ENCODE measurements at regions of chr12 and their contacts with region 1.

Region 1: GRCh38 chr12:32659908-32660440 is 19.1 kb upstream of the DNM1L start:
- DNase-seq: no peak
- ATAC-seq: no peak; the same call in 1 of the 2 replicates
- H3K4me3 ChIP-seq: no peak overlapping the region
- H3K27ac ChIP-seq: no peak overlapping the region
- H3K4me1 ChIP-seq: no peaks in the 10 kb centered on the region
- H3K27me3 ChIP-seq: no peaks in the 10 kb centered on the region
- CTCF ChIP-seq: no peak

Region 2: DNA sequence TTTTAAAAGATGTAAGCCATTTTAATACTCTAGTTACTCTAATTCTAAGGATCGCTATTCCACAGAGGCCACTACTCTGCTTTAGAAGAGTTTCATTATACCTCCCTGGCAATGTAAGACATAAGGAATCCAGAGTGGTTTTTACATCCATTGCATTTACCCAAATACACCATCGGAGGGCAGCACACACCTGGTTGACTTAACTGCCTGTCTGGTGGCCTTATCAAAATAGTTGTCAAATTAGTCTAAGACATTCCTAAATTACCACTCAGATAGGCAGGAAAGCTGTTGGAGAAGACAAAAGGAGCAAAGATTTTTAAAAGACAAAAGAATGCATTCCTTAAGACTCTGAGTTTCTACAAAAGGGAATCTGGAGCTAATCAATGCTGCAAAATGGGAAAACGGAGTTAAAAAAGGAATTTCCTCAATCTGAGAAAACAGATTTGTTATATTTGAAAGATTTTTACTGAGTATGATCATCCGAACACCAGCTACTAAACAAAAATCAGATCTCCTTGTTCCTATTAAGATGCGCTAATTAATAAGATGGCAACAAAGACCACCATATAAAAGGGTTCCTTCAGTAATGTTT is 294.4 kb before region 1 on chr12:
- CTCF ChIA-PET with region 1: no interaction called
- POLR2A ChIA-PET with region 1: no interaction called
- intact Hi-C with region 1: loop called (anchors 5 kb)
- DNase-seq: peak; percentile 72
- ATAC-seq: peak; percentile 55
- H3K4me3 ChIP-seq: no peak overlapping the region
- H3K27ac ChIP-seq: no peak overlapping the region
- H3K4me1 ChIP-seq: peaks cover 4% of the 10 kb centered on the region; the same call in 1 of the 2 replicates
- H3K27me3 ChIP-seq: no peaks in the 10 kb centered on the region
- CTCF ChIP-seq: peak; percentile 85

Region 3: DNA sequence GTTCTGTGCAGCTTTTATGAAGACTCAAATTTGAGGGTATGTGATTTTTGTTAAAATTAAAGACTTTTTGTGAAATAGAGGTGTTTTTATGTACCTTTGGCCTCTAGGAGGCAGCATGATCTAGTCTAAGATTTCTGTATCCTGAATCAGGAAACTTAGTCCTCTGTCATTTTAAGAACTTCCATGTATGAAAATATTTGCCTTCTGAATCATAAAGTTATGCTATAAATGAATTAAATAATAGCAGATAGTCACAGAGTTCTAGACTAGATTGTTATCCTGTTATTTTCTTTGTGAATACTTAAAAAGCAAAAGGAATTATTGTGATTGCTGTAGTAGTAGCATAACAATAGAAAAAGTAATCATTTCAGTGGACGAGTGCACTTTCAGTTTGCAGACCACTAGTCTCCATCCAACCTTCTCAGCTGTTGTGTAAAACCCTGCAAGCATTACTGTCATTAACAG is 204.3 kb before region 1 on chr12:
- CTCF ChIA-PET with region 1: no interaction called
- POLR2A ChIA-PET with region 1: no interaction called
- intact Hi-C with region 1: loop called (anchors 1 kb)
- DNase-seq: peak; percentile 81
- ATAC-seq: peak; percentile 66
- H3K4me3 ChIP-seq: peak overlapping the region; percentile 54
- H3K27ac ChIP-seq: no peak overlapping the region
- H3K4me1 ChIP-seq: peaks cover 34% of the 10 kb centered on the region
- H3K27me3 ChIP-seq: no peaks in the 10 kb centered on the region
- CTCF ChIP-seq: peak; percentile 70

Region 4: DNA sequence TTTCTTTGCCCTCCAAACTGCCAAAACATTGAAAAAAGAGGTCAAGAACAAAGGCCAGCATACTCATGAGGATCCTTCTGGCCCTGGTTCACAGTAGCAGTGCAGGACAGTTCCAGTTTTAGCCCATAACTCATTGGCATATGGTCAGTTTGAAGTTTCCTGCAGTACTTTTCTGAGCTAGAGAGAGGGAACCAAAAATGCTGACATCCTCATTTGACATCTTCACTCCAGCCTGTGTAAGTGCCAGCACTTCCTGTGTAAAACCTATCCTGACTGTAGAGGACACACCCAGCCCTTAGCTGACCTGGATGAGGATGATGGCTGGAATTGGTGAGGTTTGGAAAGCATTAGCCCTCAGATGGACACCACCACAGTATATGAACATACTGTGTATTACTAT is 176.5 kb before region 1 on chr12:
- CTCF ChIA-PET with region 1: no interaction called
- POLR2A ChIA-PET with region 1: no interaction called
- intact Hi-C with region 1: no loop called
- DNase-seq: no peak
- ATAC-seq: no peak
- H3K4me3 ChIP-seq: no peak overlapping the region
- H3K27ac ChIP-seq: no peak overlapping the region
- H3K4me1 ChIP-seq: 0 out of 2 replicates have a peak, but pooled peaks cover 6% of the 10 kb centered on the region
- H3K27me3 ChIP-seq: no peaks in the 10 kb centered on the region
- CTCF ChIP-seq: no peak

Region 5: DNA sequence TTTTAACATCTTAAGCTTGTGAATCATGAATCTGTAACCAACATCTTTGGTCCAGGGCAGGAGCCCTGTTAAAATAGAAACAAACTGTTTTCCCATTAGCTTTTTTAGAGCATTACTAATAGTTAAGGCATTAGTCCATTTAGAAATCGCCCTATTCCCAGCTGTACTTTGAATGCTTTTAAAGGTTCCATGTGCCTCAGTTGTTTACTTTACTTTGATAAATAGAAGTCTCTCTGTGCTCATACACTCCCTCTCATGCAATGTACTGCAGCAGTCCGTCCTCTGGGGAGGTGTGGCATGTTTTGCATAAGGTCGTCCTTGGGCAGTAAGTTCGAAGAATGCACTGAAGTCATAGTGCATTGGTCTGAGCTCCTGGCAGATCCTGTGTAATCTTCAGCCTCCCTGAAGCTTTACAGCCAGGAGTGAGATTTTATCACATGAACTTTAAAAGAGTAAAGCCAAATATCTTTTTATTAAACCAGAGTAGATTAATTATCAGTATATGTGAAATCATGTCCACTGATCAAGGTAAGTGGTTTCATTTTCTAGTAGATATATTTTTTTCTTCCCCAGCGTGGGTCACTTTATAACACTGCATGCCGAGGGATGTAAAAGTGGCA is 125.9 kb before region 1 on chr12:
- CTCF ChIA-PET with region 1: interaction called, 5 read pairs
- POLR2A ChIA-PET with region 1: interaction called, 3 read pairs
- intact Hi-C with region 1: loop called (anchors 10 kb)
- DNase-seq: peak; percentile 43
- ATAC-seq: peak; percentile 93
- H3K4me3 ChIP-seq: peak overlapping the region; percentile 60
- H3K27ac ChIP-seq: no peak overlapping the region
- H3K4me1 ChIP-seq: peaks cover 15% of the 10 kb centered on the region
- H3K27me3 ChIP-seq: no peaks in the 10 kb centered on the region
- CTCF ChIP-seq: no peak

Measured in PC-3 (cell line).